CD8-positive, alpha-beta T cell (primary cell): ENCODE measurements at regions of chr13 and their contacts with region 1.

Region 1: DNA sequence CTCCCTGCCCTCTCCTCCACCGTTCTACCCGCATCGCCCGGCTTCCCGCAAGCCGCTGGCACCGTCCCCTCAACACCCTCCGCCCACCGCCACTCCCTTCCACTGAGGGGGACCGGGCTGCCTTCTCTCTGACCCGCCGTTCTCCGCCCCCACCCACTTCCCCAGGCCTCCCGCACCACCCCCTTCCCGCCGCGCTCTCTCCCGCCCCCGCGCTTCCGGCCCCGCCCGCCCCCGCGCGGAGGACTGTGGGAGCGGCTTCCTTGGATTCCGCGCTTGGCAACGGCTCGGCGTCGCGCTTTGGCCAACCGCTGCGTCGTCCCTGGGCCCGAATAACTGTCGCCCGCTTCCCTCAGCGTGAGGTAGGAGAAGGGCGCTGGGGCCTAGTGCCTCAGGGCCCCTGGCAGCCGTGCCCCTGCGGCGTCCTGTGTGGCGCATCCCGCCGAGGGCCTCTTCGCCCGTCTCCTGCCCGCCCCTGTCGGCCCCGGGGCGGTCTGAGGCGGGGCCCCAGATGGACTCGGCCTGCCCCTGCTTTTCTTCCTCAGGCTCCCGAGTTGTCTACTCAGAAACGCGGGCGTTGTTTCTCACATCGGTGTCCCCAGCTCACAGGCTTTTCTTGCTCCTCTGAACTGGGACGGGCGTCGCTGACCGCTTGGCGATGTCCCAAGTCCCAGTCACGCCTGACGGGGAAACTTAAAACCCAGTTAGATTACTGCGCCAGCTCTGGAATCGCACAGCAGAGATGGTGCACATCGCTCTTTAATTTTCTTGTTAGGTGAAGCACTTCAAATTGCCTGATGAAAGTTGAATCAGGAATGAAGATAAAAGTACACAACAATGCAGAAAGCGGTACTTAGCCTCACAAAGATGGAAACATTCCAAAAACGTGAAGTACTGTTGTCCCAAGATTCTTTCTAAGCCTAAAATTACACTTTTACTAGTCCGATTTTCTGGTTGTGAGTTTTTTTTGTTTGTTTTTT is at the start of gene IFT88:
- DNase-seq: peak; percentile 49 to 90 (median 80)
- ATAC-seq: peak; percentile 86
- H3K4me3 ChIP-seq: peak within 1 kb of the TSS; percentile 70 to 71
- H3K4me3 Mint-ChIP-seq: peak within 1 kb of the TSS; percentile 87
- H3K27ac ChIP-seq: peak within 1 kb of the TSS; percentile 70 to 77
- H3K27ac Mint-ChIP-seq: peak within 1 kb of the TSS; percentile 89
- H3K4me1 ChIP-seq: no peaks in the 10 kb centered on the region
- H3K4me1 Mint-ChIP-seq: peaks cover 17% of the 10 kb centered on the region
- H3K27me3 ChIP-seq: no peaks in the 10 kb centered on the region
- H3K27me3 Mint-ChIP-seq: no peaks in the 10 kb centered on the region
- CTCF ChIP-seq: no peak
- total RNA-seq, gene IFT88: 7.5 to 8.2 TPM

Region 2: DNA sequence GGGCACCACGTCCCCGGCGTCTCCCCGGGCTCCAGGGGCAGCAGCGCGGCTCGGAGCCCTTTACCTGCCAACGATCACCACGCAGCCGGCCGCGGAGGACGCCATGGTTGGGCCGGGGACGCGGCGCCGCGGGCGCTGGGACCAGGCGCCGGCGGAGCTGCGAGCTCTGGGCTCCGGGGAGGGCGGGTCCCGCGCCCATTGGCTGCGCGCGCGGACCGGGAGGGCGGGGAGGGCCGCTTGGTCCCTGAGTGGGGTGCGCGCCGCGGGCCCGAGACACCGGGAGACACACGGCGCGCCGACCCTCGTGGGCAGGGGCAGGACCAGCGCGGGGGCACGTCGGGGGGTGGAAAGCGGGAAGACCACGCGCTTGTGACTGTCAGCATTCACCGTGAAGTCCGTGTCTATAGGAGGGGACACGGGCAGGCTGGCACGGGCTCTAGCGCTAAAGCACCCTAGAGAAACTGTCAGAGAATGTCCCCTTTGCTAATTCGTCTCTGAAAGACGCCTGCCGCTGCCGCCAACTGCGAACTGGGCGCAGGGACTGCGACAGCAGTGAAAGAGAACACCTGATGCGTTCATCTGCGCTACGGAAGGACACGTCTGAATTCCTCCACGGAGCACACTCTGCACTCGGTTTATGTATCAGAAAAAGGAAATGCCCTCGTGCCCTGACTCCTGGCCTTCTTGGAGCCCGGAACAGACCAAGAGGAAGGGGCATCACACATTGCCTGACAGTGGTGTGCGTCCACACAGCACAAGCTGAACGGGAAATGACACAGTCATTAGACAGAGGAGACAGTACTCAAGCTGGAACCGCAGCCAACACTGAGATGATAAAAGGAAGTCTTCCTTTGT is 41.3 kb before region 1 on chr13 and contains the start of gene CRYL1:
- CTCF ChIA-PET with region 1: no interaction called
- POLR2A ChIA-PET with region 1: interaction called, 7 read pairs
- intact Hi-C with region 1: loop called (anchors 1 to 5 kb)
- DNase-seq: peak; percentile 46 to 86 (median 74)
- ATAC-seq: peak; percentile 89
- H3K4me3 ChIP-seq: peak within 1 kb of the TSS; percentile 78 to 81
- H3K4me3 Mint-ChIP-seq: peak within 1 kb of the TSS; percentile 96
- H3K27ac ChIP-seq: peak within 1 kb of the TSS; percentile 75 to 87
- H3K27ac Mint-ChIP-seq: peak within 1 kb of the TSS; percentile 96
- H3K4me1 ChIP-seq: peaks cover 17% of the 10 kb centered on the region
- H3K4me1 Mint-ChIP-seq: peaks cover 22% of the 10 kb centered on the region
- H3K27me3 ChIP-seq: no peaks in the 10 kb centered on the region
- H3K27me3 Mint-ChIP-seq: peaks cover 7% of the 10 kb centered on the region
- CTCF ChIP-seq: no peak
- total RNA-seq, gene CRYL1: 8.0 to 8.5 TPM

Region 3: DNA sequence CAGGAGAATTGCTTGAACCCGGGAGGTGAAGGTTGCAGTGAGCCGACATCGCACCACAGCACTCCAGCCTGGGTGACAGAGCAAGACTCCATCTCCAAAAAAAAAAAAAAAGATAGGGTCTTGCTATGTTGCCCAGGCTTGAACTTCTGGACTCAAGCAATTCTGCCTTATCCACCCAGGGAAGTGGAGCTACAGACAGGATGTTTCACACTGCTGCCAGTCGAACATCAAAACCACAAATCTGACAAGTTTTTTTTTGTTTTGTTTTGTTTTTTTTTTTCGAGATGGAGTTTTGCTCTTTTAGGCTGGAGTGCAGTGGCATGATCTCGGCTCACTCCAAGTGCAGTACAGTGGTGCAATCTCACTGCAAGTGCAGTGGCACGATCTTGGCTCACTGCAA is 324.6 kb after region 1 on chr13:
- CTCF ChIA-PET with region 1: no interaction called
- POLR2A ChIA-PET with region 1: no interaction called
- intact Hi-C with region 1: loop called in 1 of 2 experiments (anchors 10 kb)
- DNase-seq: peak in 3 of 9 experiments; percentile 14 to 68 (median 55)
- ATAC-seq: peak; percentile 58
- H3K4me3 ChIP-seq: no peak overlapping the region
- H3K4me3 Mint-ChIP-seq: no peak overlapping the region
- H3K27ac ChIP-seq: no peak overlapping the region
- H3K27ac Mint-ChIP-seq: no peak overlapping the region
- H3K4me1 ChIP-seq: peaks cover 10% of the 10 kb centered on the region
- H3K4me1 Mint-ChIP-seq: peaks cover 48% of the 10 kb centered on the region
- H3K27me3 ChIP-seq: no peaks in the 10 kb centered on the region
- H3K27me3 Mint-ChIP-seq: no peaks in the 10 kb centered on the region
- CTCF ChIP-seq: no peak